Activated CD8-positive, alpha-beta T cell treated with anti-CD3 and anti-CD28 coated beads for 36 hours (primary cell): ENCODE measurements at regions of chr20 and their contacts with region 1.

Region 1: DNA sequence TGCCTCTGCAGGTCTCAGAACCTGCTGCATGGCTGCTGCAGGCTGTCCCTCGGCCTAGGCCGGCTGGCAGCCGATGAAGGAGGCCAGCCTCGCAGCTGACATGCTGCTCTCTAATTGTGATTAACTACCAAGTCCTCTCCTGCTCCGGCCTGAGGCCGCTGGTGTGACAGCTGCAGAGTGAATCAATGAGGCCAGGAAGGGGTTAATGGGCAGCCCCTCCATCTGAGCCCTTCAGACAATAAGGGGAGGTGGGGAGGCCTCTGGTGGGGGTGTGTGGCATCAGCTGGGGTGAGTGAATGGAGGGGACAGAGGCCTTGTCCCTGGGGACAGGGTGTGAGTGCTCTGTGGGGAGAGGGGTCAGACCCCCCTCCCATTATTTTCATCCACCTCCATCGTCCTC is 34.4 kb downstream of the SLC52A3 start:
- DNase-seq: no peak
- ATAC-seq: no peak
- H3K4me3 Mint-ChIP-seq: no peak overlapping the region
- H3K27ac Mint-ChIP-seq: no peak overlapping the region
- H3K4me1 Mint-ChIP-seq: no peaks in the 10 kb centered on the region
- H3K27me3 Mint-ChIP-seq: peaks cover 15% of the 10 kb centered on the region
- CTCF ChIP-seq: no peak

Region 2: DNA sequence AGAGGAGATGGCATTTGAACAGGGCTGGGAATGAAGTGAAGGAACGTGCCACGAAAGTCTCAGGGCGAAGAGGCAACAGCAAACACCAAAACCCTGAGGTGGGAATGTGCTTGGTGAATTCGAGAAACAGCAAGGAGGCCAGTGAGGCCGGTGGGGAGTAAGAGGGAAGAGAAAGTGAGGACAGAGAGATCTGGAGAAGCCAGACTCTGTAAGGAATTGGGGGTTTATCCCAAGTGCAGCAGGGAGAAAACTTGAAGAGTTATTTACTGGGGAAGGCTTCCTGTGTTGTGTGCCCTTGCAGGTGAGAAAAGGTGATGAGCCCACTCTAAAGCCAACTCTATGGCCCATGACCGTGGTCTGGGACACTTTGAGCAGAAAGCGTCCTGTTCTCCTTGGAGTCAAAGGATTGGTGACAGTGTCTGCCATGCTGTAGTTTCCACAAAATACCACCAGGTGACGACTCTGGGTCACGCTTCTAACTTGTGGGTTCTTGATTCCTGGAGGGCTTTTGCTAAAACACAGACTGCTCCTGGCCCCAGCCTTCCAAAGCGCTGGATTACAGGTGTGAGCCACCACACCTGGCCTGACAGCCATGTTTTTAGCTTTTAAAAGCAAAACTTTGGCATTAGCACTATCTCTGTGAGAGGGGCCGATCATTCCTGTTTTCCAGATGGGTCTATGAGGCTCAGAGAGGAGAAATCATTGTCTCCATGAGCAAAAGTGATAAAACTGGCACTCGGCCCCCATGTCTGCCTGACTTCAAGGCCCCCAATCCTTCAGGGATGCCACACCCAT is 172.2 kb before region 1 on chr20:
- CTCF ChIA-PET with region 1: interaction called, 29 read pairs
- POLR2A ChIA-PET with region 1: interaction called, 3 read pairs
- intact Hi-C with region 1: loop called (anchors 10 kb)
- DNase-seq: peak; percentile 74
- ATAC-seq: peak; percentile 87
- H3K4me3 Mint-ChIP-seq: no peak overlapping the region
- H3K27ac Mint-ChIP-seq: no peak overlapping the region
- H3K4me1 Mint-ChIP-seq: no peaks in the 10 kb centered on the region
- H3K27me3 Mint-ChIP-seq: peaks cover 5% of the 10 kb centered on the region
- CTCF ChIP-seq: peak; percentile 82

Region 3: DNA sequence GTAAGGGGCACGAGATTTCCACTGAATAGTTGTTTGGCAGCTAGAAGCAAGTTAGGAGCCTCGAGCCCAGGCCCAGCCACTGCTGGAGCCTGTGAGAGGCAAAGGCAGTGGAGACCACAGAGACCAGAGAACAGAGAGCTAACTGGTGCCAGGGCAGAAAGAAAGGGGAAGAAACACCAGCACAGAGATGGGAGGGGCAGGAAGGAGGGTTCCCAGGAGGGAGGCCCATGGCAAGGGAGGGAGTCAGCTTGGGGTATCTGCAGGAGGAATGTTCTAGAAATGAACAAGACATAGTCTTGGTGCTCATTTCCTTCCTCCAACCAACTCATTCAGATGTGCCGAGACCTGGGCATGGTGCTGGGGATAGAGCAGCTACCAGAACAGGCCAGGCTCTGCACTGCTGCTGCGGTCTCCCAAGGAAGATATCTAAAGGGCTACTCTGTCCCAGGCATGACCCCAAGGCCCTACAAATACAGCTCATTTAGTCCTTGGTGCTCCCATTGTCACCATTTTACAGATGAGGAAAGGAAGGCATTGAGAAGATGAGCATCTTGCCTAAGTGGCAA is 171.6 kb after region 1 on chr20:
- CTCF ChIA-PET with region 1: no interaction called
- POLR2A ChIA-PET with region 1: no interaction called
- intact Hi-C with region 1: no loop called
- DNase-seq: no peak
- ATAC-seq: no peak
- H3K4me3 Mint-ChIP-seq: no peak overlapping the region
- H3K27ac Mint-ChIP-seq: no peak overlapping the region
- H3K4me1 Mint-ChIP-seq: no peaks in the 10 kb centered on the region
- H3K27me3 Mint-ChIP-seq: no peaks in the 10 kb centered on the region
- CTCF ChIP-seq: no peak